ENCODE measurements at regions of chr15 and their contacts with region 1.

Region 1: GRCh38 chr15:78108299-78109084 is 16.1 kb downstream of the SH2D7 start:
- DNase-seq: peak; percentile 73
- H3K4me3 Mint-ChIP-seq: no peak overlapping the region
- H3K27ac Mint-ChIP-seq: no peak overlapping the region
- H3K4me1 Mint-ChIP-seq: peaks cover 50% of the 10 kb centered on the region
- H3K27me3 Mint-ChIP-seq: no peaks in the 10 kb centered on the region

Region 2: GRCh38 chr15:77907824-77908751 is 200.4 kb before region 1 on chr15:
- intact Hi-C with region 1: loop called (anchors 1 kb)
- DNase-seq: no peak
- H3K4me3 Mint-ChIP-seq: no peak overlapping the region
- H3K27ac Mint-ChIP-seq: no peak overlapping the region
- H3K4me1 Mint-ChIP-seq: peaks cover 11% of the 10 kb centered on the region
- H3K27me3 Mint-ChIP-seq: peaks cover under 1% of the 10 kb centered on the region

Region 3: DNA sequence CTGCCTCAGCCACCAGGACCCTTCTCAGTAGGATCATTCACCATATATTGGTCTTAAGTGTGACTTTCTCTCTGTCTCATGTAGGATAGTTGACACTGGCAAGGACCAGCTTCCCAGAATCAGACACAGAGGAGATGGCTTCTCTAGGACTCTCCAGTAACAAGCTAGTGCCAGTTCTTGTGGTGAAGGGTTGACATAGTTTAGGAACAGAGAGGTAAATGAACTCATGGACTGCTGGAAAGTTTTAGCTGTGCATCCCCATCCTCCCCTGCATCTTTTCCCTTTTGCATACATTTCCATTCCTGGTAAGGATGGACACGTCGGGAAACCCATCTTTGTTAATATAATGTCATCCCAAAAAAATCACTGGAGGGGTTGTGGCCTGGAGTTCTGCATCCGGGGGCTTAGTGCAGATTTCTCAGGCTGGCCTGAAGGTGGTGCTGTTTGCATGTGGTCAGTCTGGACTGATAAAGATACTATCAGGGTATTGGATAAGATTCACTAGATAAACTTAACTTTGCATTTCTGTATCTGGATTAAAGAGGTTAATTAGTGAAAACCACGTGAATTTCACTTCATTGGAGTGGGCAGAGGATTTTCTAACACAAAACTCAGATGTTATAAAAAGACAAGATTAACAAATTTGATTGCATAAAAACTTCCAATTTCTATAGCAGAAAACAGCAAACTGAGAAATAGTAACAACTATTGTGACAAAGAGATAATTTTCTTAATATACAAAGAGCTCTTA is 141.8 kb before region 1 on chr15:
- intact Hi-C with region 1: loop called (anchors 1 kb)
- DNase-seq: peak; percentile 18
- H3K4me3 Mint-ChIP-seq: no peak overlapping the region
- H3K27ac Mint-ChIP-seq: no peak overlapping the region
- H3K4me1 Mint-ChIP-seq: no peaks in the 10 kb centered on the region
- H3K27me3 Mint-ChIP-seq: peaks cover 51% of the 10 kb centered on the region

Region 4: DNA sequence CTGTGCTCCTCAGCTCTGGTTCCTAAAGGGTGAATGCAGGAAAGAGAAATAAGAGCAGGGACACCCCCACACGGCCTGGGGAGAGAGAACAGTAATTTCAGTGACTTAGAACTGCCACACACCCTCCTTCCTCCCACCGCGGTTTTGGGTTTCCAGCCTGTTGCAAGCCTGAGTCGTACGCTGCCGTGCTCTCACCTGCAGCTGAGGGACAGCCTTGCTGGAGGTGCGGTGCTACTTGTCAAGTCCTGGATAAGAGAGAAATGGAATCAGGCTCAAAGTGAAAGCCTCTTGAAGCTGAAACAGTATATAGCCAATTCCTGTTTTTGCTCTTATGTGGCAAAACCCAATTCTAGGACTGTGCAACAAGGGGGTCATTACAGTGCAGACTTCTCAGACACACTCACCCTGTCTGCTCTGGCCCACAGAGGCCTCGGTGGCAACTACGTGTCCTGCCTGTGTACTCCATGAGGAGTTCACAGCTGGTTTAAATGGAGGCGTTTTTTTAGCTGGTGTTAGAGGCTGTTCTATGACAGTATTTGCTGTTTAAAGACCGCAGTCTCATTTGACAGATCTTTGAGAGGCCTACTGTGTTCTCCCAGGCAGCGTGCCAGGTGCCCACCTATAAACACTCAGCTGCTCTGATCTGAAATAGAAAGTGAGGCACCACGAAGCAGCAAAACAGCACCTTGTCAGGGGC is 73.8 kb before region 1 on chr15:
- intact Hi-C with region 1: loop called (anchors 1 kb)
- DNase-seq: peak; percentile 79
- H3K4me3 Mint-ChIP-seq: peak overlapping the region; percentile 17
- H3K27ac Mint-ChIP-seq: peak overlapping the region; percentile 84
- H3K4me1 Mint-ChIP-seq: peaks cover 84% of the 10 kb centered on the region
- H3K27me3 Mint-ChIP-seq: no peaks in the 10 kb centered on the region

Region 5: DNA sequence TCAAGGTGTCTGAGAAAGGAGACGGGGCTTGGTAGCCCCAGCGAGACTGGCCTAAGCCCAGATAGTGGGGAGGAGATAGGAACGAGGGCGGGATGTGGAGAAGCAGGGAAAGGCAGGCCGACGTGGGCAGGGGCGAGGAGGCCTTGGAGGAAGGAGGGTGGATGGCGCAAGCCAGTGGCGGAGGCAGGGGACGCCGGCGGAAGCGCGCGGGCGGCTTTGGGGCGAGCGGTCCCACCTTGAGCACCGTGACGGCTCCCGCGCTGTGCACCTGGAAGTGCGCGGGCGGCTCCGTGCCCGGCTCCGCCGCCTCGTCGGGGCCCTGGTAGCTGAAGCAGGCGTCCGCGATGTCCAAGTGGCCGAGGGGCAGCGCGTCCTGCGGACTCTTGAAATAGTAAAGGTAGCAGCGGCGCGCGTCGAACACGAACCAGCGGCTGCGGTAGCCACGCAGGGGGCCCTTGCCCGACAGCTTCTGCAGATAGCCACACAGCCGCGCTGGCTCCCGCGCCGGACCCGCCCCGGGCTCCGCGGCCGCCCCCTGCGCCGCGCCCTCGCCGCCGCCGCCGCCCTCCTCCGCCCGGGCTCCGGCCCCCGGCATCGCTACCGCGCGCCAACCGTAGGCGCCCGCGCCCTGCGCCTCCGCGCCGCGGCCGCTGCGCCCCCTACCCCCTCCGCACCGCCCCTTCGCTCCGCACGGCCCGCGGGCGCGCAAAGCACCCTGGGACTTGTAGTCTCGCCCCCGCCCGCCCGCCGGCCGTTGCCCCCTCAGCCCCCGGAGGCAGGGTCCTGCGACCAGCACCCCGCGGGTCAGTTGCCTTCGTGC is 31.2 kb before region 1 on chr15 and contains the start of gene TBC1D2B:
- intact Hi-C with region 1: loop called (anchors 2 kb)
- DNase-seq: peak; percentile 66
- H3K4me3 Mint-ChIP-seq: peak within 1 kb of the TSS; percentile 100
- H3K27ac Mint-ChIP-seq: peak within 1 kb of the TSS; percentile 95
- H3K4me1 Mint-ChIP-seq: peaks cover 43% of the 10 kb centered on the region
- H3K27me3 Mint-ChIP-seq: no peaks in the 10 kb centered on the region
- total RNA-seq, gene TBC1D2B: 60.8 and 64.7 TPM in 2 replicates

Region 6: DNA sequence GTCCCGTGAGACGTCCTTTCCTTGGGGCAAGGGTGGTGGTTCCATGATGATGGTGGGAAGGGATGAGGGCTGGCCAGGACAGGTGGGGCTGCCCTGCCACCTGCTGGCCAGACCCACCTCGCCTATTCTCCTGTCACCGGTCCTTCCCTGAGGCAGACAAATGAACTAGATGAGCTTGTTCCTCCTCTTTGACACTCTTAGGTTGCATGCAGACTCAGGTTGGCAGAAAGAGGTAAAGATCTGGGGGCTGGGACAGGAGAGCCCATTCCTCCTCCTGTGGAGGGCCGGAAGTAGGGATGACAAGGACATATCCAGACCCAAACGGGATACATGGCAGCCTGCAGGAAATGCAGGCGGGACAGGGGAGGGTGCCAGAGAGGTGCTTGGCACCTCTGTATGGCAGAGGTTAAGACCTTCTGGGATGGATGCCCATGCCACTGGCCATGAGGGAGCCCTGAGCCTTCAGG is 87.3 kb after region 1 on chr15:
- intact Hi-C with region 1: loop called (anchors 1 kb)
- DNase-seq: peak; percentile 26
- H3K4me3 Mint-ChIP-seq: no peak overlapping the region
- H3K27ac Mint-ChIP-seq: no peak overlapping the region
- H3K4me1 Mint-ChIP-seq: no peaks in the 10 kb centered on the region
- H3K27me3 Mint-ChIP-seq: peaks cover 14% of the 10 kb centered on the region

Region 7: GRCh38 chr15:78422571-78423340 is 314.3 kb after region 1 on chr15:
- intact Hi-C with region 1: loop called (anchors 5 kb)
- DNase-seq: peak; percentile 32
- H3K4me3 Mint-ChIP-seq: no peak overlapping the region
- H3K27ac Mint-ChIP-seq: no peak overlapping the region
- H3K4me1 Mint-ChIP-seq: peaks cover 12% of the 10 kb centered on the region
- H3K27me3 Mint-ChIP-seq: peaks cover 17% of the 10 kb centered on the region